ENCODE measurements at regions of chr1 and their contacts with region 1.

Region 1: GRCh38 chr1:51729156-51729823 is 112.4 kb downstream of the OSBPL9 start:
- DNase-seq: peak; percentile 97
- H3K4me3 Mint-ChIP-seq: peak overlapping the region; percentile 98
- H3K27ac Mint-ChIP-seq: peak overlapping the region; percentile 86
- H3K4me1 Mint-ChIP-seq: peaks cover 27% of the 10 kb centered on the region
- H3K27me3 Mint-ChIP-seq: no peaks in the 10 kb centered on the region
- CTCF ChIP-seq: no peak

Region 2: GRCh38 chr1:51519048-51519864 is 210.0 kb before region 1 on chr1 and contains the start of gene EPS15:
- CTCF ChIA-PET with region 1: no interaction called
- POLR2A ChIA-PET with region 1: interaction called, 16 read pairs
- intact Hi-C with region 1: no loop called
- DNase-seq: peak; percentile 87
- H3K4me3 Mint-ChIP-seq: peak within 1 kb of the TSS; percentile 79
- H3K27ac Mint-ChIP-seq: peak within 1 kb of the TSS; percentile 93
- H3K4me1 Mint-ChIP-seq: peaks cover 17% of the 10 kb centered on the region
- H3K27me3 Mint-ChIP-seq: no peaks in the 10 kb centered on the region
- CTCF ChIP-seq: no peak
- total RNA-seq, gene EPS15: 48.2 and 48.7 TPM in 2 replicates

Region 3: GRCh38 chr1:51627678-51628077 is 101.6 kb before region 1 on chr1:
- CTCF ChIA-PET with region 1: interaction called, 9 read pairs
- POLR2A ChIA-PET with region 1: interaction called, 14 read pairs
- intact Hi-C with region 1: no loop called
- DNase-seq: peak; percentile 69
- H3K4me3 Mint-ChIP-seq: no peak overlapping the region
- H3K27ac Mint-ChIP-seq: no peak overlapping the region
- H3K4me1 Mint-ChIP-seq: peaks cover 12% of the 10 kb centered on the region
- H3K27me3 Mint-ChIP-seq: no peaks in the 10 kb centered on the region
- CTCF ChIP-seq: peak; percentile 51

Region 4: DNA sequence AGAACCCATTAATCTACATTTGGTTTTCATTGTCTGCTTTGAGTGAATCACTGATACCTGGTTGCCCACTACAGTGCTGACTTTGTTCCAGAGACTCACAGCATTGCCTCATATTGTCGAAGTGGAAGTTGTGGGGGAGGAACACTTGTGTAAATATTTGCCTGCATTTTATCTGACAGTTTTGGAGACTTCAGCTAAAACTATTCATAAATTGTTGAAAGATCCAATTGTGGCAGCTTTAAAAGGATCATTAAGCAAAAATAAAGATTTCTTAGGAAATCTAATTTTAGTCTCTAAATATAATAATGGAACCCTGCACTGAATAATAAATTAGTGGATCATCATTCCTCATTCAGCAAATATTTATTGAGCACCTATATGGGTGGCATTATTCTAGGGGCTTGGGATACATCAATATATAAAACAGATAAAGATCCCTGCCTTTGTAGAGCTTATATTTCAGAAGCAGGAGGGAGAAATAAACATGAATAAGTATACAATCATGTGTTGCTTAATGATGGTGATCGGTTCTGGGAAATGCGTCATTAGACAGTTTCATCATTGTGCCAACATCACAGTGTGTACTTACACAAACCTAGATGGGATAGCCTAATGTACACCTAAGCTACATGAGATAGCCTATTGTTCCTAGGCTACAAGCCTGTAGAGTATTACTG is 38.9 kb before region 1 on chr1:
- CTCF ChIA-PET with region 1: interaction called, 6 read pairs
- POLR2A ChIA-PET with region 1: interaction called, 92 read pairs
- intact Hi-C with region 1: no loop called
- DNase-seq: peak; percentile 95
- H3K4me3 Mint-ChIP-seq: peak overlapping the region; percentile 26
- H3K27ac Mint-ChIP-seq: peak overlapping the region; percentile 68
- H3K4me1 Mint-ChIP-seq: peaks cover 51% of the 10 kb centered on the region
- H3K27me3 Mint-ChIP-seq: no peaks in the 10 kb centered on the region
- CTCF ChIP-seq: no peak

Region 5: DNA sequence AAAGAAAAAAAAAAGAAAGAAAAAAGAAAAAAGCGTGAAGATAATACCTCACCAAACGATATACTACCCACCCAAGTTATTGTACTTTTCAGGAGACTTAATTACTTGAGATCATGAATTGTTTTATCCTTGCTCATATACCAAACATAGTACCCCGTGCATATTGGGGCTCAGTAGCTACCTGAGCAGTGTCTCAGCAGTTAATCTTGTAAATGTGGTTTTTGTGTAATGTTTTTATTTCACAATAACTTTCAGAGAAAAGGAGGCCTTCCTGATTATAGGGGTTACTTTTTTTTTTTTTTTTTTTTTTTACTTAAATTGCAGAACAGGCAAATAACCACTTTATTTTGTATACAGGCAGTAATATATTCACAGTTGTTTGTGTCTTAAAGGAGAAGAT is 32.1 kb before region 1 on chr1:
- CTCF ChIA-PET with region 1: no interaction called
- POLR2A ChIA-PET with region 1: interaction called, 92 read pairs
- intact Hi-C with region 1: no loop called
- DNase-seq: peak; percentile 33
- H3K4me3 Mint-ChIP-seq: no peak overlapping the region
- H3K27ac Mint-ChIP-seq: peak overlapping the region; percentile 70
- H3K4me1 Mint-ChIP-seq: peaks cover 42% of the 10 kb centered on the region
- H3K27me3 Mint-ChIP-seq: no peaks in the 10 kb centered on the region
- CTCF ChIP-seq: no peak

Region 6: DNA sequence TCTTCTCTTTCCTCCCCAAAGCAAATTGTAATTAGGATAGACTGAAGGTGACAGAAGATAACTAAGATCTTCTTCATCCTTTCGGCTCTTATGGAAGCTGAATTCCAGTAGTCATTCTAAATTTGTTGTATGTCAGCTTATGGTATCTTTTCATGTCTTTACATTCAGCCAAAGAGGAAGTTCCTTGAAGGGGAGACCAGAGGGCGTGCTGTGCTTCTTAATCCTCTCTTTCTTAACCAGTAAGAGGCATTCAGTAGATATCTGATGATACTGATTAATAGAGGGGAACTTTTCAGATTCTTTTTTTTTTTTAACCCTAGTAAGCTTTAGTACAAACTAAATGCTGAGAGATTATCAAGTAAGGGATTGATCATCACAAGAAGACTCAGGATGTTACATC is 10.1 kb before region 1 on chr1:
- CTCF ChIA-PET with region 1: interaction called, 4 read pairs
- POLR2A ChIA-PET with region 1: interaction called, 15 read pairs
- intact Hi-C with region 1: no loop called
- DNase-seq: no peak
- H3K4me3 Mint-ChIP-seq: no peak overlapping the region
- H3K27ac Mint-ChIP-seq: no peak overlapping the region
- H3K4me1 Mint-ChIP-seq: no peaks in the 10 kb centered on the region
- H3K27me3 Mint-ChIP-seq: no peaks in the 10 kb centered on the region
- CTCF ChIP-seq: no peak